Right ventricle myocardium inferior (tissue), 1 donor: ENCODE measurements at regions of chr9 and their contacts with region 1.

Region 1: DNA sequence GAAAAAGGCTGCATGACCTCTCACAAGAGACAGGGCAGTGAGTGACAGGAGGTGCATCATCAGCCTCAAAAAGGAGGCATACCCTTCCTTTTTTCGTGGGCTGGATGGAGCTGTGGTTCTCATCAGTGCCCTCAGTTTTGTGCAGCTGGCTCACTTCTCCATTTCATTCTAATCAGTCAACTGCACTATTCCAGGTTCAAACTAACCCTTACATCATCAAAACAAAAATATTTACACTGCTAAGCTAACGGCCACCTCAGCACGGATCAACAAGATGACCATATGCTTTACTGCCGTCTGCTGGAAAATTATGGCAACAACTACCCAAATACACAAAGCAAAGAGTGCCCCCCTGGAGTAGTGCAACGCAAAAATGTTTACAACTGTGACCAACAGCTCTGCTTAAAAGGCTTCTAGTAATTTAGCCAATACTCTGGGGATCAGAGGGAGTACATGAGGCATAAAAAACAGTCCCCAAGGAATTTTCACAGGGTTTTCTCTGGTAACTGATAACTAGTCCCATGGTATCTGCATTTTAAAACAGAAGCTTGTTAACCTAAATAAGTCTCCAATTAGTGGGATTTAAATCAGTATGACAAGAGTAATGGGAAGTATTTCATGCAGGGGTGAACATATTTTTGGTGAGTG is 10.8 kb downstream of the KCNV2 start:
- DNase-seq: no peak
- ATAC-seq: peak; percentile 82

Region 2: GRCh38 chr9:2321523-2322151 is 406.5 kb before region 1 on chr9:
- intact Hi-C with region 1: loop called (anchors 10 kb)
- DNase-seq: no peak
- ATAC-seq: peak; percentile 37

Region 3: GRCh38 chr9:2354856-2355696 is 373.0 kb before region 1 on chr9:
- intact Hi-C with region 1: no loop called
- DNase-seq: no peak
- ATAC-seq: no peak

Region 4: DNA sequence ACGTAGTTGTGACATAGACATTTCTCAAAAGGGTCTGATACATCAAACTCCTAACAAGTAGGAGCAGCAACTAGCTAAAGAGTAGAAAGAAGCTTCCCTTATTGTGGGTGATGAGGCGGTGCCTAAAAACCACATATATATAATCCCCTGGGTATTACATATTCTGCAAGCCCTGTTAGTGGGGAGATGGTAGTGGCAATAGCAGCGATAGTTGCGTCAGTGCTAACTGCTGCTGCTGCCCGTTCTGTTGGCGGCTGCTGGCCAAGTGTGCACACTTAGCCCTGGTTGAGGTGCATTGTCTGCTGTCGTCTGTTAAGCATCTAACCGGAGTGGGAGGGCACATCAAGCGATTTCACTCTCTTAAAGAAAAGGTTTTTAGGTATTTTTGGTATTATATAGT is 70.7 kb before region 1 on chr9:
- intact Hi-C with region 1: loop called (anchors 2 kb)
- DNase-seq: no peak
- ATAC-seq: no peak

Region 5: DNA sequence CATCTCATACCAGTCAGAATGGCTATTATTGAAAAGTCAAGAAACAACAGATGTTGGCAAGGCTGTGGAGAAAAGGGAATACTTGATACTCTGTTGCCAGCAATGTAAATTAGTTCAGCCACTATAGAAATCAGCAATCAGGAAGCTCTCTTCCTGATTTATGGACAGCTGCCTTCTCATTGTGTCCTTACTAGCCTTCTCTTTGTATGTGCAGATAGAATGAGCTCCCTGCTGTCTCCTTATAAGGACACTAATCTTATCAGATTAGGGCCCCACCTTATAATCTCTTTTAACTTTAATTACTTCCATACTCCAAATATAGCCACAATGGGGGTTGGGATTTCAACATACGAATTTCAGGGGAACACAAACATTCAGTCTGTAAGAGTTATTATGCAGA is 27.2 kb after region 1 on chr9:
- intact Hi-C with region 1: no loop called
- DNase-seq: no peak
- ATAC-seq: no peak